ENCODE measurements at regions of chr12 and their contacts with region 1.

Region 1: DNA sequence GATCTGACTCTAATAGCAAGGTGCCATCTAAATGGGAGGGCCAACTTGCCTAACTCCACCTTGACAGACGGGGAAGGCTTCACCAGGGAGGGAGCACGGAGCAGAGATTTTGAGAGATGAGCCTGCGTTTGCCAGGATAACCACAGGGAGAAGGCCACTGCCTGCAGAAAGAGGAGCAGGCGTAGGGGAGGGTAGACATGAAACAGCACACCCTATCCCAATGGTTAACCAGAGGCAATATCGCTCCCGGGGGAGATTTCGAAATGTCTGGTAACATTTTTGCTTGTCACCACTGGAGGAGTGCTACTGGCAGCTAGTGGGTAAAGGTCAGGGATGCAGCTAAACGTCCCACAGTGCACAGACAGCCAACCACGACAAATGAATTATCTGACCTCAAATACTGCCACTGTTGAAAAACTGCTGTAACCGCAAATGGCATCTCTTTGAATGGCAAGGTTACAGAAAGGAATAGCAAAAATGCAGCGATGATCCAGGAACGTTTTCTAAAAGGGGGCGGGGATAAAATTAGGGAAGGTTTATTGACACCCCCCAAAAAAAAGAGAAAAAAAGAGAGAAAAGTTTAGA is 126.0 kb upstream of the ATF7IP start:
- DNase-seq: peak in 1 of 2 donors; percentile 14
- ATAC-seq: peak; percentile 69 to 98 (median 86)
- H3K4me3 ChIP-seq: peak overlapping the region in 4 of 10 donors; percentile 5 to 40 (median 6)
- H3K27ac ChIP-seq: peak overlapping the region in 5 of 10 donors; percentile 5 to 74 (median 40)
- H3K4me1 ChIP-seq: peaks cover 0 to 21% (median 6%) of the 10 kb centered on the region in 9 donors
- H3K27me3 ChIP-seq: no peaks in the 10 kb centered on the region
- CTCF ChIP-seq: peak in 2 of 9 donors; percentile 23 to 24

Region 2: GRCh38 chr12:14264778-14265177 is 25.3 kb after region 1 on chr12:
- intact Hi-C with region 1: no loop called
- DNase-seq: no peak
- ATAC-seq: peak in 1 of 8 donors; percentile 11
- H3K4me3 ChIP-seq: no peak overlapping the region
- H3K27ac ChIP-seq: peak overlapping the region in 1 of 10 donors; percentile 48
- H3K4me1 ChIP-seq: peaks cover 3 to 32% (median 16%) of the 10 kb centered on the region in 9 donors
- H3K27me3 ChIP-seq: no peaks in the 10 kb centered on the region
- CTCF ChIP-seq: no peak

Region 3: GRCh38 chr12:14365294-14366208 is 126.1 kb after region 1 on chr12 and contains the start of gene ATF7IP:
- intact Hi-C with region 1: loop called in 2 of 10 experiments (anchors 5 kb)
- DNase-seq: peak; percentile 94 to 97
- ATAC-seq: peak; percentile 97 to 99 (median 98)
- H3K4me3 ChIP-seq: peak within 1 kb of the TSS; percentile 26 to 83 (median 72)
- H3K27ac ChIP-seq: peak within 1 kb of the TSS; percentile 82 to 99 (median 96)
- H3K4me1 ChIP-seq: peaks cover 0 to 24% (median 8%) of the 10 kb centered on the region in 9 donors
- H3K27me3 ChIP-seq: no peaks in the 10 kb centered on the region
- CTCF ChIP-seq: peak in 4 of 9 donors; percentile 36 to 61 (median 56)
- total RNA-seq, gene ATF7IP: 37.9 to 85.8 (median 67.3) TPM

Region 4: GRCh38 chr12:14394317-14395073 is 155.1 kb after region 1 on chr12:
- intact Hi-C with region 1: no loop called
- DNase-seq: peak in 1 of 2 donors; percentile 56
- ATAC-seq: peak; percentile 81 to 96 (median 91)
- H3K4me3 ChIP-seq: peak overlapping the region in 7 of 10 donors; percentile 5 to 37 (median 21)
- H3K27ac ChIP-seq: peak overlapping the region in 9 of 10 donors; percentile 24 to 80 (median 67)
- H3K4me1 ChIP-seq: peaks cover 0 to 87% (median 52%) of the 10 kb centered on the region in 9 donors
- H3K27me3 ChIP-seq: no peaks in the 10 kb centered on the region
- CTCF ChIP-seq: peak in 4 of 9 donors; percentile 8 to 32 (median 28)

Region 5: GRCh38 chr12:14454098-14454907 is 214.9 kb after region 1 on chr12:
- intact Hi-C with region 1: loop called in 1 of 10 experiments (anchors 10 kb)
- DNase-seq: no peak
- ATAC-seq: peak in 3 of 8 donors; percentile 38 to 46 (median 45)
- H3K4me3 ChIP-seq: no peak overlapping the region
- H3K27ac ChIP-seq: no peak overlapping the region
- H3K4me1 ChIP-seq: peaks cover 0 to 27% (median 0%) of the 10 kb centered on the region in 9 donors
- H3K27me3 ChIP-seq: no peaks in the 10 kb centered on the region
- CTCF ChIP-seq: peak; percentile 6 to 59 (median 43)

Region 6: GRCh38 chr12:14618983-14619382 is 379.5 kb after region 1 on chr12:
- intact Hi-C with region 1: loop called in 9 of 10 experiments (anchors 2 to 5 kb)
- DNase-seq: peak in 1 of 2 donors; percentile 18
- ATAC-seq: peak in 4 of 8 donors; percentile 52 to 68 (median 58)
- H3K4me3 ChIP-seq: no peak overlapping the region
- H3K27ac ChIP-seq: no peak overlapping the region
- H3K4me1 ChIP-seq: peaks cover 0 to 29% (median 9%) of the 10 kb centered on the region in 9 donors
- H3K27me3 ChIP-seq: no peaks in the 10 kb centered on the region
- CTCF ChIP-seq: peak in 8 of 9 donors; percentile 14 to 65 (median 50)

Region 7: DNA sequence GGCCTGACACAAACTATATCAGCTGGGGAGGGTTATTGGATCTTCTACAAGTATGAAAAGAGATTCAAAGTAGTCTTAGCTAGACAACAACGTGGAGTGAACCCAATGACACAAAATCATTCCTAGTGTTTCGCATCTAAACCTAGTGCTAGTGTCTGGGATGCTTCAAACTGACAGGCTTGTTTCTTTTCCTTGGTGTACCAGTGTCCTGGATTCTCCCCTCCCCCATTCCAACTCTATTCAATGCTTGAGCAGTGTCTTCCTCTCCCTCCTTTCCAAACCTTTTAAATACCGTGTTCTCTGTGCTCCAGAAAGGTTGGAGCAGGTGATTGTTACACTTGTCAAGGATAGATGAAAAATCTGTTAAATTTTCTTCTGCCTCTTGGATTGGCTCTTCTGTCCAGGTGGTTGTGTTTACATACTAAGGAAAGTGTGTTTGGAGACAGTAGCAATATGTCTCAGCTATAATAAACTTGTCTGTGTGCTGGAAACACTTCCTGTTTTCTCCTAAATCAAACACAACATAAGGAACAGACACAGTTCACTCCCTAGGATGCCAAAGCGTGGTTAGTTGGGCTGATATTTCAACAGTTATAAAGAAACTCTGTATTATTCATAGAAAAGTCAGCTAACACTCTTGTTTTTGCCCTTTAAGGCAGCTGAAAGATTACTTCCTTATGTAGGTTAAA is 471.3 kb after region 1 on chr12:
- intact Hi-C with region 1: loop called in 1 of 10 experiments (anchors 5 kb)
- DNase-seq: no peak
- ATAC-seq: no peak
- H3K4me3 ChIP-seq: no peak overlapping the region
- H3K27ac ChIP-seq: no peak overlapping the region
- H3K4me1 ChIP-seq: no peaks in the 10 kb centered on the region
- H3K27me3 ChIP-seq: peaks cover 0 to 4% (median 0%) of the 10 kb centered on the region in 7 donors
- CTCF ChIP-seq: no peak

Measured in heart right ventricle (tissue), 16 donors.